CD8-positive, alpha-beta T cell (primary cell): ENCODE measurements at regions of chr9 and their contacts with region 1.

Region 1: GRCh38 chr9:27333241-27334052 is 36.5 kb upstream of the EQTN start:
- DNase-seq: peak in 8 of 9 experiments; percentile 6 to 69 (median 39)
- ATAC-seq: peak; percentile 76
- H3K4me3 ChIP-seq: no peak overlapping the region
- H3K4me3 Mint-ChIP-seq: no peak overlapping the region
- H3K27ac ChIP-seq: no peak overlapping the region
- H3K27ac Mint-ChIP-seq: no peak overlapping the region
- H3K4me1 ChIP-seq: peaks cover 2% of the 10 kb centered on the region
- H3K4me1 Mint-ChIP-seq: no peaks in the 10 kb centered on the region
- H3K27me3 ChIP-seq: no peaks in the 10 kb centered on the region
- H3K27me3 Mint-ChIP-seq: peaks cover 5% of the 10 kb centered on the region
- CTCF ChIP-seq: peak; percentile 90

Region 2: GRCh38 chr9:27414220-27414761 is 80.8 kb after region 1 on chr9:
- CTCF ChIA-PET with region 1: no interaction called
- POLR2A ChIA-PET with region 1: no interaction called
- intact Hi-C with region 1: no loop called
- DNase-seq: no peak
- ATAC-seq: no peak
- H3K4me3 ChIP-seq: no peak overlapping the region
- H3K4me3 Mint-ChIP-seq: no peak overlapping the region
- H3K27ac ChIP-seq: no peak overlapping the region
- H3K27ac Mint-ChIP-seq: no peak overlapping the region
- H3K4me1 ChIP-seq: no peaks in the 10 kb centered on the region
- H3K4me1 Mint-ChIP-seq: no peaks in the 10 kb centered on the region
- H3K27me3 ChIP-seq: no peaks in the 10 kb centered on the region
- H3K27me3 Mint-ChIP-seq: no peaks in the 10 kb centered on the region
- CTCF ChIP-seq: no peak

Region 3: GRCh38 chr9:27529316-27530278 is 196.2 kb after region 1 on chr9 and contains the start of gene MOB3B:
- CTCF ChIA-PET with region 1: interaction called, 54 read pairs
- POLR2A ChIA-PET with region 1: no interaction called
- intact Hi-C with region 1: loop called (anchors 1 kb)
- DNase-seq: peak; percentile 49 to 86 (median 77)
- ATAC-seq: peak; percentile 95
- H3K4me3 ChIP-seq: peak within 1 kb of the TSS; percentile 44 to 67
- H3K4me3 Mint-ChIP-seq: peak within 1 kb of the TSS; percentile 92
- H3K27ac ChIP-seq: no peak within 1 kb of the TSS
- H3K27ac Mint-ChIP-seq: no peak within 1 kb of the TSS
- H3K4me1 ChIP-seq: no peaks in the 10 kb centered on the region
- H3K4me1 Mint-ChIP-seq: peaks cover 12% of the 10 kb centered on the region
- H3K27me3 ChIP-seq: peaks cover 0 to 3% of the 10 kb centered on the region in 2 experiments
- H3K27me3 Mint-ChIP-seq: no peaks in the 10 kb centered on the region
- CTCF ChIP-seq: peak; percentile 95
- total RNA-seq, gene MOB3B: 0.11 to 0.17 TPM

Region 4: GRCh38 chr9:27548055-27548741 is 214.8 kb after region 1 on chr9:
- CTCF ChIA-PET with region 1: interaction called, 4 read pairs
- POLR2A ChIA-PET with region 1: no interaction called
- intact Hi-C with region 1: loop called in 1 of 2 experiments (anchors 5 kb)
- DNase-seq: peak in 2 of 9 experiments; percentile 11 to 19
- ATAC-seq: no peak
- H3K4me3 ChIP-seq: no peak overlapping the region
- H3K4me3 Mint-ChIP-seq: no peak overlapping the region
- H3K27ac ChIP-seq: no peak overlapping the region
- H3K27ac Mint-ChIP-seq: no peak overlapping the region
- H3K4me1 ChIP-seq: no peaks in the 10 kb centered on the region
- H3K4me1 Mint-ChIP-seq: no peaks in the 10 kb centered on the region
- H3K27me3 ChIP-seq: no peaks in the 10 kb centered on the region
- H3K27me3 Mint-ChIP-seq: no peaks in the 10 kb centered on the region
- CTCF ChIP-seq: peak; percentile 20

Region 5: DNA sequence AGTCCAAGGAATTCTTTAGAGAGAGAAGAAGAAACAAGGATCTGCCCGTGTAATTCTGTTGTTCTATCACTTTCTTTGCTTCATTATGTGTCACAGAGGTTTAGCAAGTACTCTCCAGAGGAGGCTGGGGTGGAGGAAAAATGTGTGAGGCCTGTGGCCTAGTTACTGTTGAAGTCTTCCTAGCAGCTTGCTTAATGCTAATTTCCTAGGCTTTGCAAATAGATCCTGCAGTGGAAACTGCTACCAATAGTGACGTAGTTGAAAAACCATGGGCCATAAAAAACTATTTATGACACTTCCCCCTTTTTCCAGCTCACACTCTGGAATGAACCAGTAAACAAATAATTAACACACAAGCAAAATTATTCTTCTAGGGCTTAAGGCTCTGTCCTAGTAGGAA is 266.8 kb after region 1 on chr9:
- CTCF ChIA-PET with region 1: no interaction called
- POLR2A ChIA-PET with region 1: no interaction called
- intact Hi-C with region 1: loop called in 1 of 2 experiments (anchors 5 kb)
- DNase-seq: no peak
- ATAC-seq: no peak
- H3K4me3 ChIP-seq: no peak overlapping the region
- H3K4me3 Mint-ChIP-seq: no peak overlapping the region
- H3K27ac ChIP-seq: no peak overlapping the region
- H3K27ac Mint-ChIP-seq: no peak overlapping the region
- H3K4me1 ChIP-seq: no peaks in the 10 kb centered on the region
- H3K4me1 Mint-ChIP-seq: no peaks in the 10 kb centered on the region
- H3K27me3 ChIP-seq: no peaks in the 10 kb centered on the region
- H3K27me3 Mint-ChIP-seq: peaks cover 2% of the 10 kb centered on the region
- CTCF ChIP-seq: no peak

Region 6: DNA sequence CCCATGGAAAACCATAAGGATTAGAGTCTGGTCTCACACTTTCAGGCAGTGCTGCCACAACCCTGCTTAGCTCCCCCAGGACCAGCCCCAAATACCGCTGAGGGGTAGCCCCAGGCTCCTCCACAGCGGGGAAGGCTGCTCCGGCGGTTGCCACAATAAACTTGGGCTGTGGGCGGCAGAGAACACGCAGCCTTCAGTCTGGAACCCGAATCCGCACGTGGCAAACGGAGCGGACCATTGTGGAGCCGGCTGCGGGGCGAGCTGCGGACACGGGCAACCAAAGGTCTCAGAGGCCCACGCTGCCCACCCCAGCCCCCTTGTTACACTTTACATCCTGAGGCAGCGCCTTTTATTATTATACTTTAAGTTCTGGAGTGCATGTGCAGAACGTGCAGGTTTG is 277.2 kb after region 1 on chr9:
- CTCF ChIA-PET with region 1: no interaction called
- POLR2A ChIA-PET with region 1: no interaction called
- intact Hi-C with region 1: loop called in 1 of 2 experiments (anchors 2 kb)
- DNase-seq: no peak
- ATAC-seq: no peak
- H3K4me3 ChIP-seq: no peak overlapping the region
- H3K4me3 Mint-ChIP-seq: no peak overlapping the region
- H3K27ac ChIP-seq: no peak overlapping the region
- H3K27ac Mint-ChIP-seq: no peak overlapping the region
- H3K4me1 ChIP-seq: no peaks in the 10 kb centered on the region
- H3K4me1 Mint-ChIP-seq: no peaks in the 10 kb centered on the region
- H3K27me3 ChIP-seq: no peaks in the 10 kb centered on the region
- H3K27me3 Mint-ChIP-seq: peaks cover 11% of the 10 kb centered on the region
- CTCF ChIP-seq: no peak

Region 7: DNA sequence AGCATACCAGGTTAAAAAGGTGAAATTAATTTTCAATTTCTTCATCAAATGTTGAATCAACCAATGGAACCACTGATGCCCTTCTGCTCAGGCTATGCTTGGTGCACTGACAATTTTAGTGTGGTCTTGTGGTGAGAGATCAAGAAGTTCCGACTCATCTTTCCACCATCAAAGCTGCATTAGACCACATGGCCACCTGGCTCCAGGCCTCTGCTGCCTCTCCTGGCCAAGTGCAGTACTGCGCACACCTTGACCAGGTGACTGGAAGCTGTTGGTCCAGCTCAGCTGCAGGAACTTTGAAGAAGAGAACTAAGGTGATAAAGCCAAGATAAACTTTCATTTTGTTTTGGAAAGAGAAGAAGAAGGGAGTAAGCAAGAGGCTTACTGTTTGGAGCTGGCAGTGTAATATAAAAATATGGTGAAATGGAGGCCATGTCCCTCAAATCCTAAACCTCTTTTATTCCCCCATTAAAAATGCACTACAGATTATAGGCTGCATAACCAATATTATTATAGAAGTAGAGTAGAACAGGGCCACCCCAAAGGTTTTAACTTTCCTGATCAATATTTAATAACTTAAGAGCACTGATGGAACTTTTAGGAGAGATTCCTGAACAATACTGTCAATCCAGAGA is 555.3 kb after region 1 on chr9:
- CTCF ChIA-PET with region 1: no interaction called
- POLR2A ChIA-PET with region 1: no interaction called
- intact Hi-C with region 1: loop called in 1 of 2 experiments (anchors 5 kb)
- DNase-seq: peak in 4 of 9 experiments; percentile 3 to 20 (median 10)
- ATAC-seq: no peak
- H3K4me3 ChIP-seq: no peak overlapping the region
- H3K4me3 Mint-ChIP-seq: no peak overlapping the region
- H3K27ac ChIP-seq: no peak overlapping the region
- H3K27ac Mint-ChIP-seq: no peak overlapping the region
- H3K4me1 ChIP-seq: no peaks in the 10 kb centered on the region
- H3K4me1 Mint-ChIP-seq: no peaks in the 10 kb centered on the region
- H3K27me3 ChIP-seq: no peaks in the 10 kb centered on the region
- H3K27me3 Mint-ChIP-seq: no peaks in the 10 kb centered on the region
- CTCF ChIP-seq: peak; percentile 45